ENCODE measurements at regions of chr21 and their contacts with region 1.

Region 1: GRCh38 chr21:46424039-46424591 is 34.6 kb upstream of the DIP2A start:
- DNase-seq: peak; percentile 56 to 70
- ATAC-seq: peak; percentile 47 to 58 (median 49)
- H3K4me3 ChIP-seq: no peak overlapping the region
- H3K4me3 Mint-ChIP-seq: peak overlapping the region; percentile 83
- H3K27ac ChIP-seq: peak overlapping the region; percentile 92
- H3K27ac Mint-ChIP-seq: peak overlapping the region; percentile 95 to 98
- H3K4me1 ChIP-seq: peaks cover 44% of the 10 kb centered on the region
- H3K4me1 Mint-ChIP-seq: peaks cover 20 to 32% of the 10 kb centered on the region in 2 donors
- H3K27me3 ChIP-seq: no peaks in the 10 kb centered on the region
- H3K27me3 Mint-ChIP-seq: no peaks in the 10 kb centered on the region
- CTCF ChIP-seq: no peak

Region 2: DNA sequence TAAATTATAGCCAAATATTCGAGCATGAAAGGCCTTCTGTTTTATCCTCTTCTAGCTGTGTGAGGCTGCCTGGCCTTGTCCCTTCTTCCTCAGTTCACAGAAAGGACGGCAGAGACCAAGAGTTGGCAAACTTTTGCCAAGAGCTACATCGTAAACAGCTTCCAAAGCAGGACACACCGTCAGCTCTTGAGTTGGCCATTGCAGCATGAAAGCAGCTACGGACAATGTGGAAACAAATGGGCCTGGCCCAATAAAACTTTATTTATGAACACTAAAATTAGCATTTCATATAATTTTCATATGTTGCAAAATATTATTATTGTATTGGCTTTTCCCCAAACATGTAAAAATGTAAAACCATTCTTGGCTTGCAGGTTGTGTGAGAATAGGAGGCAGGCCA is 111.2 kb before region 1 on chr21:
- intact Hi-C with region 1: no loop called
- DNase-seq: no peak
- ATAC-seq: no peak
- H3K4me3 ChIP-seq: no peak overlapping the region
- H3K4me3 Mint-ChIP-seq: no peak overlapping the region
- H3K27ac ChIP-seq: no peak overlapping the region
- H3K27ac Mint-ChIP-seq: no peak overlapping the region
- H3K4me1 ChIP-seq: no peaks in the 10 kb centered on the region
- H3K4me1 Mint-ChIP-seq: no peaks in the 10 kb centered on the region
- H3K27me3 ChIP-seq: no peaks in the 10 kb centered on the region
- H3K27me3 Mint-ChIP-seq: no peaks in the 10 kb centered on the region
- CTCF ChIP-seq: no peak

Region 3: GRCh38 chr21:46323227-46324128 is 100.6 kb before region 1 on chr21 and contains the start of gene C21orf58:
- intact Hi-C with region 1: loop called (anchors 5 kb)
- DNase-seq: peak; percentile 99
- ATAC-seq: peak; percentile 83 to 93 (median 83)
- H3K4me3 ChIP-seq: peak within 1 kb of the TSS; percentile 100
- H3K4me3 Mint-ChIP-seq: peak within 1 kb of the TSS; percentile 97
- H3K27ac ChIP-seq: peak within 1 kb of the TSS; percentile 100
- H3K27ac Mint-ChIP-seq: peak within 1 kb of the TSS; percentile 92 to 96
- H3K4me1 ChIP-seq: peaks cover 20% of the 10 kb centered on the region
- H3K4me1 Mint-ChIP-seq: peaks cover 24 to 27% of the 10 kb centered on the region in 2 donors
- H3K27me3 ChIP-seq: no peaks in the 10 kb centered on the region
- H3K27me3 Mint-ChIP-seq: no peaks in the 10 kb centered on the region
- CTCF ChIP-seq: no peak
- total RNA-seq, gene C21orf58: 4.0 to 8.9 (median 5.2) TPM

Region 4: DNA sequence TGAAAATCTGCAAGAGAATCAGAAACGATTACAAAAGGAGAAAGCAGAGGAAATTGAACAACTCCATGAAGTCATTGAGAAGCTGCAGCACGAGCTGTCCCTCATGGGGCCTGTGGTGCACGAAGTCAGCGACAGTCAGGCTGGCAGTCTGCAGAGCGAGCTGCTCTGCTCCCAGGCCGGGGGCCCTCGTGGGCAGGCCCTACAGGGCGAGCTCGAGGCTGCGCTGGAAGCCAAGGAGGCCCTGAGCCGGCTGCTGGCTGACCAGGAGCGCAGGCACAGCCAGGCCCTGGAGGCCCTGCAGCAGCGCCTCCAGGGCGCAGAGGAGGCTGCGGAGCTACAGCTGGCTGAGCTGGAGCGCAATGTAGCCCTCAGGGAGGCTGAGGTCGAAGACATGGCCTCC is 12.9 kb before region 1 on chr21:
- intact Hi-C with region 1: loop called (anchors 2 kb)
- DNase-seq: no peak
- ATAC-seq: no peak
- H3K4me3 ChIP-seq: no peak overlapping the region
- H3K4me3 Mint-ChIP-seq: no peak overlapping the region
- H3K27ac ChIP-seq: no peak overlapping the region
- H3K27ac Mint-ChIP-seq: no peak overlapping the region
- H3K4me1 ChIP-seq: peaks cover 15% of the 10 kb centered on the region
- H3K4me1 Mint-ChIP-seq: peaks cover 32% of the 10 kb centered on the region in 2 donors
- H3K27me3 ChIP-seq: no peaks in the 10 kb centered on the region
- H3K27me3 Mint-ChIP-seq: no peaks in the 10 kb centered on the region
- CTCF ChIP-seq: no peak

Region 5: DNA sequence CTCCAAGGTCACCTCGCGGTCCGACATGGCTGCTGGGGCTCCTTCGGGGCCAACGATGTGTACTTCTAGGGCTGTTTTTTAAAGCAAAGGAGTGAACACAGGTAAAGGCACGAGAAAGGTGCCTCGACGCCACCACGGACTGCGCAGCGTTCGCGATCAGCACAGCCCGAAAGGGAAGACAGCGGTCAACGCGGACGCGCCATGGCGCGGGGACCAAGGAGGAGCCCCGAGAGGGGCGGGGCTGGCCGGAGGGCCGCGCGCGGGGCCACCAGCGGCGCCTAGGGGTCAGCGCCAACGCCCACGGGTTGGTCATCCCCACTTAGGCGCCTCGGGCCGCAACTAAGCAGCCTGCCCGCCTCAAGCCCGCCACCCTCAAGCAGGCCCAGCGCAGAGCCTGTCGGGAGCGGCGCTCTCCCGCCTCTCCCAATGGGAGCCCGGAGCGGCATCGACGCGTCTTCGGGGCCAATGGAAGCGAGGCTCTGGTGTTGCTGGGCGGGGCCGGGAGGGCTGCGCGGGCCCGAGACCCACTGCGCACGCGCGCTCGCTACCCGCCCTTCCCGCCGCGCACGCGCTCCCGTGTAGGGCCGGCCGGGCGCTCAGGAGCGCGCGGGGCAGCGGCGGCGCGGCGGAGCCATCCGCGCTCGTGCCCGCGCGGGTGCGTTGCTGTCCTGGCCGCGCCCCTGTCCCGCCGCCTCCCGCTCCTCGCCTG is 34.4 kb after region 1 on chr21 and contains the start of gene DIP2A:
- intact Hi-C with region 1: loop called (anchors 1 kb)
- DNase-seq: peak; percentile 95 to 99
- ATAC-seq: peak; percentile 95 to 99 (median 97)
- H3K4me3 ChIP-seq: peak within 1 kb of the TSS; percentile 89
- H3K4me3 Mint-ChIP-seq: peak within 1 kb of the TSS; percentile 93
- H3K27ac ChIP-seq: peak within 1 kb of the TSS; percentile 87
- H3K27ac Mint-ChIP-seq: peak within 1 kb of the TSS; percentile 92
- H3K4me1 ChIP-seq: peaks cover 28% of the 10 kb centered on the region
- H3K4me1 Mint-ChIP-seq: peaks cover 46 to 63% of the 10 kb centered on the region in 2 donors
- H3K27me3 ChIP-seq: no peaks in the 10 kb centered on the region
- H3K27me3 Mint-ChIP-seq: no peaks in the 10 kb centered on the region
- CTCF ChIP-seq: no peak
- total RNA-seq, gene DIP2A: 166 to 308 (median 170) TPM

Region 6: DNA sequence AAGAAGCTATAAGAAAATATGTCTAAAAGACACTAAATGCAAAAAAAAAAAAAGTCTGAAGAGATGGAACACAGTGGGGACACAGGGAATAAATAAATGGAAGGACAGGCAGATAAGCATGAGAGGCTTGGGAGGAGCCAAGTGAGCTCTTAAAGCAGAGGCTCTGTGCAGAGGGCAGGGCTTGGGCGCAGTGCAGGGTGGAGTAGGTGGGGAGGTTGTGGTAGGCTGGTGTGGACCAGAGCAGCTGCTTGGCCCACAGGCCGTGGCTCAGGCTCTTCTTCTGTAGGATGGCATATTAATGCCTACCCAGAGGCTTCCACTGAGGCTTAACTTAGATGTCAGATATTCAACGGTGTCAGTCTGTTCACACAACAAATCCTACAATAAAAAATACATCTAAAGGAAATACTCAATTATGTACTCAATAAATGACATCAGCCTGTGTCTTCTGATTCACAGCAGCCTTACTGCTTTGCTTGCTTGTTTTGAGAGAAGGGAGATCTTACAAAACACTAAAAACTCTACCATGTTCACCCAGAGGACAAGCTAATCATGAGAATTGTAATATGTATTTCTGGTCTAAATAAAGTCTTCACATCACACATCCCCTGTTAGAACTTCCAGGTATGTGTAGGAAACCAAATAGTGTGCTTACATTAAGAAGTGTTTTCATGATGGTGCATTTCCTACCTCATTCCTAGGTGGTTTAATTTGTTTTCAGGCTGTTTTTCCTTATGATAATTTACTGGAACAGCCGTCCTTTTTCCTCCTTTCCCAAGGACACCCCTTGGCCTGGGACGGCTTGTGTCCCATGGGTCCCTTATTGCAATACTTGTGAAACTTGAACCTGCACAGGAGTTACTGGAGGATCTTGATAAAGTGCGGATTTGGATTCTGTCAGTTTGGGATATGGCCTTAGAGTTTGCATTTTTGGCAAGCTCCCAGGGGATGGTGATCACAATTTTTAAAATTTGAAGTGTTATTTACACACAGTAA is 59.5 kb after region 1 on chr21:
- intact Hi-C with region 1: loop called (anchors 2 kb)
- DNase-seq: peak; percentile 33 to 49
- ATAC-seq: peak; percentile 84 to 98 (median 91)
- H3K4me3 ChIP-seq: no peak overlapping the region
- H3K4me3 Mint-ChIP-seq: peak overlapping the region; percentile 73
- H3K27ac ChIP-seq: peak overlapping the region; percentile 39
- H3K27ac Mint-ChIP-seq: peak overlapping the region; percentile 71 to 90
- H3K4me1 ChIP-seq: peaks cover 17% of the 10 kb centered on the region
- H3K4me1 Mint-ChIP-seq: peaks cover 62 to 68% of the 10 kb centered on the region in 2 donors
- H3K27me3 ChIP-seq: no peaks in the 10 kb centered on the region
- H3K27me3 Mint-ChIP-seq: no peaks in the 10 kb centered on the region
- CTCF ChIP-seq: no peak